ENCODE measurements at regions of chr4 and their contacts with region 1.

Region 1: DNA sequence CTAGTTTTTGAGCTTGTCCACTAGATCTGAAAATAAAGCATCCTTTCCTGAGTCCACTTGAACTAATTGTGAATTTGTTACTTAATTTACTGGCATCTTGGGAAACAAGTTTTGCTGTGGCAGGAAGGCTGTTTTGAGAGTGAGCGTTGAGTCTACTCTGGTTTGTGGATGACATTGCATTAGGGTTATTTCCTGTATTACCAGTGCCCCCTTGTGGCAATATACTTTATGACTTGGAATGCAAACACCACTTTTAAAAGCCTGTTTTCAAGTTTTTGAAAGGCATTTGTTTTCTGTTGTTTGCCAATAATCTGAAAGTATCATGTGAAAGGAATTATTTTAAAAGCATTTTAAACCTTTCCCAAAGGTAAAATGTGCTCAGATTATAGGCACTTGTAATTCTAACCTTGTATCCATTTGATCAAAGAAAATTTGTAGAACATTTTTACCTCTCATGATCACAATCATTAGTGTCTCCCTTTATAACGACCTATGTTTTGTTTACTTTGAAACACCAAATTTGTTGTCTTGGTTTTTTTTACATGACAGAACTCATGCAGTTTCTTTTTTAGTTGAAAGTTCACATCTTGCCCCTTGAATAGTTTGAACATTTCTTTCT is 18.0 kb upstream of the CYP2U1 start:
- DNase-seq: peak in 1 of 10 donors; percentile 11

Region 2: DNA sequence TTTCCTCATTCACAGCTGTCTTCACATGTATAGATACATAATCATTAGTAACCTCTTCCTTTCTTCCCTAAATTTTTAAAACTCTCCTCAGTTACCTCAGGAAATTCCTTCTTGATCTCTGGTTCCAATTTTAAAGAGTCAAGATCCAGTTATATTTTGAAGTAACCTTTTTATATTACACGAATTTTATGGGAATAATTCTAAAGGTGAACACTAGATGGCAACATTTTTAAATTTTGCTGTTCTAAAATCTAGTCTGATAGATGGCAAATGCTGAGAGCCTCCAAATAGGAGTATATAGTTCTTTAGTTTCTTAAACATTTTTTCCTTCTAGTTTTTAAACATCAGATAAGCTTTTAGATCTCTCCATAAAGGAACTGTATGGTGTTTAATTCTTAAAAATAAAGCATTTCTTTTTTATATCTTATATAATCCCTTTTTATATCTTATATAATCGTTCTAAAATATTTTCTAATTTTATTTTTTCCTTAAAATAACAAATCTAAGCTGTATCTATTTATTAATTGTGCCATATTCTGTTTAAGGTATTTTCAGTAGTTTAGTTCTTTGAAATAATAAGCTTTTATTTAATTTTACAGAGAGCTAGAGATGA is 155.4 kb before region 1 on chr4:
- intact Hi-C with region 1: loop called (anchors 1 kb)
- DNase-seq: no peak

Region 3: GRCh38 chr4:108192018-108192417 is 278.6 kb after region 1 on chr4:
- intact Hi-C with region 1: no loop called
- DNase-seq: no peak